ENCODE measurements at regions of chr1 and their contacts with region 1.

Region 1: DNA sequence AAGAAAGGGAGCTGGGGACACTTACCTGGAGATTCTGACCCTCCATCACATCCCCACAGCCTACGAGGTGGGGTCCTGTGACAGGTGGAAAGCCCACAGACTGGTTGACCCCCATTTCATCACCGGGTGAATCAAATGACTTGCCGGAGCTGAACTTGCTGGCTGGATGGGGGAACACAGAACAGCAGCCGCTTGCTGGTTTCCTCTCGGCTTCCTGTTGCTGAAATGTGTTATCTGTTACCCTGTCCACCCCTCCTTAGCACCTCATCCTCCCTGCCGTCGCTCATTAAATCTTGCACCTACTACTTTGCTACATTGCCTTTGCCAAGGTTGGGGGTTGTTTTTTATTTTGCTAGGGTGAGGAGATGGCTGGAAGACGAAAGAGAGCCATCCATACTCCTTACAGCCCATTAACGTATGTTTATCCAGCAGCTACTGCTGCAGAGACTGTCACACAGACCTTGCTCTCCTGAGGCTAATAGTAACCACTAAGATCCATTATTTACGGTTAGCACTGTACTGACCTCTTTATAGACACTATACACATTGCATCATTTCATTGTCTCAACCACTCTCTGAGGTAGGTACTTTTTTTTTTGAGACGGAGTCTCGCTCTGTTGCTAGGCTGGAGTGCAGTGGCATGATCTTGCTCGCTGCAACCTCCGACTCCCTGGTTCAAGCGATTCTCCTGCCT is 7.0 kb downstream of the PAFAH2 start:
- DNase-seq: no peak
- H3K4me3 ChIP-seq: no peak overlapping the region
- H3K27ac ChIP-seq: no peak overlapping the region
- H3K4me1 ChIP-seq: no peaks in the 10 kb centered on the region
- H3K27me3 ChIP-seq: no peaks in the 10 kb centered on the region
- CTCF ChIP-seq: no peak
- POLR2A ChIP-seq: no peak

Region 2: DNA sequence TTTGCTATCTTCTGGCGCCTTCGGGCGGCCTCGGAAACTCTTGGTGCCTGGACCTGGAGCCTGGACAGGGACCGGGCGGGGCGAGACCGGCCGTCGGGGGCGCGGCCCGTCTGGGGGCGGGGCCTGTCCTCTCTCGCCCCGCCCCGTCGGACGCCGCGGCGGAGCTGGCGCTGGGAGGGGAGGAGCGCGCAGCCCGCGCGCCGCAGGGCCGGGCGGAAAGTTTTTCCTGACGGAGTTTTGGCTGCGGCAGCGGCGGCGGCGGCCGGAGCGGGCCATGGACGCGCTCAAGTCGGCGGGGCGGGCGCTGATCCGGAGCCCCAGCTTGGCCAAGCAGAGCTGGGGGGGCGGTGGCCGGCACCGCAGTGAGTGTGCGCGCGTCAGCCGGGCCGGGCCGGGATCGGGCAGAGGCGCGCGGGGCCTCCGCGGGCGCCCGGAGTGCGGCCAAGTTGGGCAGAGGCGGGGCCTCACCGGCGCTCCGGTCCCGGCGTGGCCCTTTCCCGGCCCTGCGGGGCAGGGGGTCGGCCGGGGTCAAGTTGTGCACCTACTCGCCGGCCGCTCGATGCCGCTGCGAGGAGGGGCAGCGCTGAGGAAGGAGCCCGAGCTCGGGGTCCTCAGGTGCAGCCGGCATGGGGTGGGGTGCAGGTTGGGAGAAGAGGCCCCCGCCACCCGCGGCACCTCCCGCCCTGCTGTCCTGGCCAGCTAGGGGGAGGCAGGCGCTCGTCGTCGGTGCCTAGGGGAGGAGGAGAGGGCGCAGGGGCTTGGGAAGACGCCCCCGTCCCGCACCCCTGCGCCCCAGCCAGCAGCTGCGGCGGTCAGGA is 447.2 kb before region 1 on chr1 and contains the start of gene LDLRAP1:
- CTCF ChIA-PET with region 1: no interaction called
- POLR2A ChIA-PET with region 1: no interaction called
- dilution Hi-C with region 1: no loop called
- intact Hi-C with region 1: no loop called
- DNase-seq: peak; percentile 74
- H3K4me3 ChIP-seq: peak within 1 kb of the TSS; percentile 65 to 80 (median 75)
- H3K27ac ChIP-seq: peak within 1 kb of the TSS; percentile 23
- H3K4me1 ChIP-seq: peaks cover 7% of the 10 kb centered on the region
- H3K27me3 ChIP-seq: no peaks in the 10 kb centered on the region
- CTCF ChIP-seq: no peak
- POLR2A ChIP-seq: peak; percentile 72
- total RNA-seq, gene LDLRAP1: 20.8 and 24.7 TPM in 2 replicates

Region 3: GRCh38 chr1:26003262-26003661 is 12.4 kb after region 1 on chr1:
- CTCF ChIA-PET with region 1: interaction called, 15 read pairs
- POLR2A ChIA-PET with region 1: no interaction called
- dilution Hi-C with region 1: no loop called
- intact Hi-C with region 1: no loop called
- DNase-seq: no peak
- H3K4me3 ChIP-seq: no peak overlapping the region
- H3K27ac ChIP-seq: no peak overlapping the region
- H3K4me1 ChIP-seq: peaks cover 5% of the 10 kb centered on the region
- H3K27me3 ChIP-seq: peaks cover 3 to 5% of the 10 kb centered on the region in 2 experiments
- CTCF ChIP-seq: no peak
- POLR2A ChIP-seq: no peak

Measured in endothelial cell of umbilical vein (primary cell).